Posterior cingulate gyrus (tissue), 11 donors: ENCODE measurements at regions of chr9 and their contacts with region 1.

Region 1: GRCh38 chr9:125407974-125408900 is 146.6 kb downstream of the GAPVD1 start:
- DNase-seq: peak; percentile 58 to 96 (median 78)

Region 2: GRCh38 chr9:124110307-124110915 is 1297.8 kb before region 1 on chr9:
- intact Hi-C with region 1: no loop called
- DNase-seq: peak in 5 of 10 donors; percentile 14 to 43 (median 25)

Region 3: GRCh38 chr9:124743686-124744348 is 664.4 kb before region 1 on chr9:
- intact Hi-C with region 1: no loop called
- DNase-seq: no peak

Region 4: GRCh38 chr9:125361837-125362531 is 46.3 kb before region 1 on chr9:
- intact Hi-C with region 1: no loop called
- DNase-seq: no peak

Region 5: GRCh38 chr9:125631391-125632085 is 223.3 kb after region 1 on chr9:
- intact Hi-C with region 1: loop called (anchors 5 kb)
- DNase-seq: no peak

Region 6: GRCh38 chr9:125758986-125759763 is 350.9 kb after region 1 on chr9:
- intact Hi-C with region 1: no loop called
- DNase-seq: peak in 6 of 10 donors; percentile 30 to 92 (median 52)

Region 7: DNA sequence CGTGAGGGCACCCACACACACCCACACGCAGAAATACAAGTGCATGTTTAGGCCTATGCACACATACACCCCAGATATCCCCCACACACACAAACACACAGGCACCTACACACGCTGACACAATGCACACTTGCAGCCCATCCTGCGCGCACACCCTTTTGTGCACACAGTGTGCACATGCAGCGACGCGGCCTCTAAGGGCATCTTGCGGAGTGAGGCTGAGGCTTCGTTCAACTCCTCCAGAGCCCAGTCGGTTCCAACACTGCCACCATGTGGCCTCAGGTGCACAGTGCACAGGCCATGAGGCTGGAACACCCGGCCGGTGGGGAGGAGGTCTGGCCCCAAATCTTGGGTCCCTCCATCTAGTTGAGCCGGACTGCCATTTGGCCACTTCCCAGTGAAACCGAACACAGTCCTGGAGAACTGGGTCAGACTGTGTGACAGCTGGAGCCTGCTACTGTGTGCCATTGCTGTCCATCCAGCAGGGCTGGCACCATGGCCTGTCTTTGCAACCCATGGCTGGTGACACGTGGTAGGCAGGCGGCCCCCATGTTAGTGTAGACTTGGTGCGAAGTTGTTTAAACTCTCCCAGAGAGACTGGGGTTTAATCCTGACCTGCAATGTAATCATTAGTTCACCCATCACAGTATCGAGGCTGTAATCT is 820.7 kb after region 1 on chr9:
- intact Hi-C with region 1: loop called (anchors 5 kb)
- DNase-seq: peak; percentile 65 to 97 (median 82)

Region 8: GRCh38 chr9:126398403-126399058 is 990.3 kb after region 1 on chr9:
- intact Hi-C with region 1: loop called (anchors 5 kb)
- DNase-seq: peak; percentile 76 to 98 (median 92)

Region 9: GRCh38 chr9:126558051-126558665 is 1149.9 kb after region 1 on chr9:
- intact Hi-C with region 1: loop called (anchors 2 kb)
- DNase-seq: peak in 9 of 10 donors; percentile 20 to 93 (median 67)